CD4-positive, alpha-beta memory T cell (primary cell): ENCODE measurements at regions of chr2 and their contacts with region 1.

Region 1: DNA sequence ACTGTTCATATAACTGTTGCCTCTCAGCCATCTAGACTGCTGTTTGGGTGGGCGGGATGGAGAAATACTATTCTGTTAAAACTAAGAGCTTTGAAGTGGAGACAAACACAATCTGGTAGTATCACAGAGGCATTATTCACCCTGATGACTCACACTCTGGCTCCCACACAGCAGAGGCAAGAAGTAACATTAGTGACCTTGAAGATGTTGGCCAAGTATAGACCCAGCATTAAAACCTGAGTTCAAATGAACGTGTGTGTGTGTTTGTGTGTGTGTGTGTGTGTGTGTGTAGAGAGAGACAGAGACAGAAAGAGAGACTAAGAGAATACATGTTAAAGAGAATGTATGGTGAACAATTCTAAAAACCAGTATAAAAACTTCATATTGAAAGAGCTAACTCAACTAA is 22.5 kb upstream of the ACVR1 start:
- DNase-seq: peak in 4 of 5 donors; percentile 15 to 83 (median 32)
- H3K4me3 ChIP-seq: peak overlapping the region in 1 of 2 donors; percentile 11
- H3K4me3 Mint-ChIP-seq: peak overlapping the region; percentile 40 to 95 (median 90)
- H3K27ac ChIP-seq: peak overlapping the region; percentile 51
- H3K27ac Mint-ChIP-seq: peak overlapping the region; percentile 96 to 100 (median 99)
- H3K4me1 ChIP-seq: peaks cover 77% of the 10 kb centered on the region
- H3K4me1 Mint-ChIP-seq: peaks cover 62 to 79% (median 72%) of the 10 kb centered on the region in 4 donors
- H3K27me3 ChIP-seq: no peaks in the 10 kb centered on the region
- H3K27me3 Mint-ChIP-seq: no peaks in the 10 kb centered on the region

Region 2: GRCh38 chr2:157611110-157611509 is 287.5 kb before region 1 on chr2:
- CTCF ChIA-PET with region 1: no interaction called
- POLR2A ChIA-PET with region 1: no interaction called
- intact Hi-C with region 1: no loop called
- DNase-seq: no peak
- H3K4me3 ChIP-seq: no peak overlapping the region
- H3K4me3 Mint-ChIP-seq: peak overlapping the region in 1 of 8 donors; percentile 37
- H3K27ac ChIP-seq: no peak overlapping the region
- H3K27ac Mint-ChIP-seq: no peak overlapping the region
- H3K4me1 ChIP-seq: no peaks in the 10 kb centered on the region
- H3K4me1 Mint-ChIP-seq: peaks cover 0 to 6% (median 2%) of the 10 kb centered on the region in 4 donors
- H3K27me3 ChIP-seq: no peaks in the 10 kb centered on the region
- H3K27me3 Mint-ChIP-seq: peaks cover 2 to 4% of the 10 kb centered on the region in 2 donors

Region 3: GRCh38 chr2:157628477-157629415 is 269.8 kb before region 1 on chr2 and contains the start of gene ACVR1C:
- CTCF ChIA-PET with region 1: no interaction called
- POLR2A ChIA-PET with region 1: interaction called, 3 read pairs
- intact Hi-C with region 1: loop called (anchors 5 kb)
- DNase-seq: peak; percentile 70 to 81 (median 75)
- H3K4me3 ChIP-seq: peak within 1 kb of the TSS; percentile 45 to 68
- H3K4me3 Mint-ChIP-seq: peak within 1 kb of the TSS; percentile 92 to 98 (median 95)
- H3K27ac ChIP-seq: peak within 1 kb of the TSS; percentile 58
- H3K27ac Mint-ChIP-seq: peak within 1 kb of the TSS; percentile 85 to 94 (median 89)
- H3K4me1 ChIP-seq: peaks cover 39% of the 10 kb centered on the region
- H3K4me1 Mint-ChIP-seq: peaks cover 22 to 48% (median 33%) of the 10 kb centered on the region in 4 donors
- H3K27me3 ChIP-seq: no peaks in the 10 kb centered on the region
- H3K27me3 Mint-ChIP-seq: peaks cover 0 to 2% of the 10 kb centered on the region in 2 donors
- total RNA-seq, gene ACVR1C: 6.3 to 6.9 TPM

Region 4: GRCh38 chr2:157815421-157815820 is 83.2 kb before region 1 on chr2:
- CTCF ChIA-PET with region 1: no interaction called
- POLR2A ChIA-PET with region 1: no interaction called
- intact Hi-C with region 1: no loop called
- DNase-seq: no peak
- H3K4me3 ChIP-seq: no peak overlapping the region
- H3K4me3 Mint-ChIP-seq: no peak overlapping the region
- H3K27ac ChIP-seq: no peak overlapping the region
- H3K27ac Mint-ChIP-seq: no peak overlapping the region
- H3K4me1 ChIP-seq: no peaks in the 10 kb centered on the region
- H3K4me1 Mint-ChIP-seq: peaks cover 4 to 15% (median 11%) of the 10 kb centered on the region in 4 donors
- H3K27me3 ChIP-seq: no peaks in the 10 kb centered on the region
- H3K27me3 Mint-ChIP-seq: no peaks in the 10 kb centered on the region

Region 5: DNA sequence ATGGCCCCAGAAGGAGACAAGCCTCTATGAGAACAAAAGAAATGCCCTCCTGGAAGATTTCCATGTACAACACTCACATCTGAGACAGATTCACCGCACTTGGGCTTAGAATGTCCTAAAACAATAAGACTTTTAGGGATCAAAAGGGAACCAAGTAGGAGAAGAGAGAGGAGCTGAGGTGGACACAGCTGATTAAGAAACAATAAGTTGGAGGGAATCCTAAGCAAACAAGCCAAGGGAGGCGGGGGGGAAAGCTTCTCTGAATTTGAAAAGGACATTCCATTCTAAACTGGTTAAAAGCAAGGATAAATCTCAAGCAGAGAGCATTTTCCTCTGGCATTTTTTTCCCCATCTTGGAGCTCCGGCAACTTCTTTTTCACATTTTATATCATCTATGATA is 32.4 kb before region 1 on chr2:
- CTCF ChIA-PET with region 1: interaction called, 5 read pairs
- POLR2A ChIA-PET with region 1: interaction called, 5 read pairs
- intact Hi-C with region 1: loop called (anchors 5 kb)
- DNase-seq: no peak
- H3K4me3 ChIP-seq: no peak overlapping the region
- H3K4me3 Mint-ChIP-seq: no peak overlapping the region
- H3K27ac ChIP-seq: no peak overlapping the region
- H3K27ac Mint-ChIP-seq: no peak overlapping the region
- H3K4me1 ChIP-seq: peaks cover 50% of the 10 kb centered on the region
- H3K4me1 Mint-ChIP-seq: peaks cover 43 to 62% (median 49%) of the 10 kb centered on the region in 4 donors
- H3K27me3 ChIP-seq: no peaks in the 10 kb centered on the region
- H3K27me3 Mint-ChIP-seq: no peaks in the 10 kb centered on the region

Region 6: GRCh38 chr2:157911750-157912149 is 13.2 kb after region 1 on chr2:
- CTCF ChIA-PET with region 1: interaction called, 17 read pairs
- POLR2A ChIA-PET with region 1: no interaction called
- intact Hi-C with region 1: no loop called
- DNase-seq: no peak
- H3K4me3 ChIP-seq: no peak overlapping the region
- H3K4me3 Mint-ChIP-seq: no peak overlapping the region
- H3K27ac ChIP-seq: no peak overlapping the region
- H3K27ac Mint-ChIP-seq: no peak overlapping the region
- H3K4me1 ChIP-seq: no peaks in the 10 kb centered on the region
- H3K4me1 Mint-ChIP-seq: peaks cover 0 to 10% (median 0%) of the 10 kb centered on the region in 4 donors
- H3K27me3 ChIP-seq: no peaks in the 10 kb centered on the region
- H3K27me3 Mint-ChIP-seq: no peaks in the 10 kb centered on the region